Breast epithelium (tissue), 4 donors: ENCODE measurements at regions of chr10 and their contacts with region 1.

Region 1: DNA sequence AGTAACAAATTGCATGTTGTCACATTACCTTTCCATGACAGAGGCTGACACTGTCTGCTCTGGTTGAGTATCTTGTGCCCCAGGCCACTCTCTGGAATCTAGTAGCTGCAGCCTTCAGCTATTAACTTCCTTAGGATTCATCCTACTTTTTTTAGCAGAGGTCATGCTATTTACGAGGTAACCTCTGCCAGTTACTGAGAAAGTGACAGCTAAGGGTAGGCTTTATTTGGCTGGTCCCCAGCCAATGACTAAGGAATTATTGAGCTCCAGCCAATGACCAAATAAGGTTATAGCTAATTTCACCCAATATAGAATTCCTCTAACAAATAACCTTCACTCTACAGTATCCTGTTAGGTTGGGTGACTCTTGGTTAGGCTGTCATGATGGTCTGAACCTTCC is 1361.7 kb downstream of the XPNPEP1 start:
- DNase-seq: no peak
- H3K4me3 ChIP-seq: no peak overlapping the region
- H3K27ac ChIP-seq: no peak overlapping the region
- H3K4me1 ChIP-seq: no peaks in the 10 kb centered on the region
- H3K27me3 ChIP-seq: no peaks in the 10 kb centered on the region
- CTCF ChIP-seq: no peak
- POLR2A ChIP-seq: no peak

Region 2: GRCh38 chr10:106978756-106979155 is 1582.9 kb before region 1 on chr10:
- intact Hi-C with region 1: loop called (anchors 5 kb)
- DNase-seq: no peak
- H3K4me3 ChIP-seq: no peak overlapping the region
- H3K27ac ChIP-seq: no peak overlapping the region
- H3K4me1 ChIP-seq: no peaks in the 10 kb centered on the region
- H3K27me3 ChIP-seq: no peaks in the 10 kb centered on the region
- CTCF ChIP-seq: no peak
- POLR2A ChIP-seq: no peak

Region 3: DNA sequence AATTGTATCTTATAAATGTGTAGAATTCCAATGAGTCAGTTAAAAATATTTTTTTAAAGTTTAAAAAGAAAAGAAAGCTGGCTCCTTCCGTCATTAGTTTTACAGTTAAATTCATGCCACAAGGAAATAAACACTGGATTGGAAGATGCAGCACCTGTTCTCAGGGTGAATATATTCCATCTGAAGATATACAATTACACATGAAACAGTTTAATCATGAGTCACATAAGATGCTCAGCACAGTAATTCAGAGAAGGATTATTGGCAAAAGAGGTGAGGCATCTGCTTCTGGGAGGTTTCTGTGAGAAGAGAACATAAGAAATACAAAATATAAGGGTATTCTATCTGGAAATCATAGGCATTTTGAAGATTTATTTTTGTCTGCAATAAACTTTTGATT is 1020.7 kb before region 1 on chr10:
- intact Hi-C with region 1: no loop called
- DNase-seq: no peak
- H3K4me3 ChIP-seq: no peak overlapping the region
- H3K27ac ChIP-seq: no peak overlapping the region
- H3K4me1 ChIP-seq: no peaks in the 10 kb centered on the region
- H3K27me3 ChIP-seq: no peaks in the 10 kb centered on the region
- CTCF ChIP-seq: no peak
- POLR2A ChIP-seq: no peak

Region 4: DNA sequence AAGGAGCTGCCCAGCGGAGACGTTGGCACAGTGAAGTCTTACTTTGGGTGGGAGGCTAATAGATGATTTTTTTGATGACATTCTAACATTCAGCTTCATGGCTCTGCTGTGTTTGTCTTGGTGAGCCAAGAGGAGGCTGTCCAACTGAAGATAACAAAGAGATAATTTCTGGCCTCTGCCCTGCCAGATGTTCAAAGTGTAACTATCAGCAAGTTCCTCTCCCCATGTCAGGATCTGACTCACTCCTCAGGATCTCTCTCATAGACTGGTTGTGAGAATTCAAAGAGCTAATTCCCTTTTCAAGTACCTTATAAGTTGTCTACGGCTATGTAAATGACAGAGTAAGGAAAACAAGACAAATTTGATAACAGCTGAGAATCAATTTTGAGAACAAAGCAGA is 20.7 kb after region 1 on chr10:
- intact Hi-C with region 1: no loop called
- DNase-seq: no peak
- H3K4me3 ChIP-seq: no peak overlapping the region
- H3K27ac ChIP-seq: no peak overlapping the region
- H3K4me1 ChIP-seq: no peaks in the 10 kb centered on the region
- H3K27me3 ChIP-seq: no peaks in the 10 kb centered on the region
- CTCF ChIP-seq: no peak
- POLR2A ChIP-seq: no peak